K562 (cell line): ENCODE measurements at regions of chr7 and their contacts with region 1.

Region 1: GRCh38 chr7:151448261-151449252 is 8.6 kb upstream of the CRYGN start:
- DNase-seq: peak; percentile 81 to 92 (median 88)
- ATAC-seq: peak; percentile 93
- H3K4me3 ChIP-seq: peak overlapping the region; percentile 27
- H3K27ac ChIP-seq: no peak overlapping the region
- H3K4me1 ChIP-seq: peaks cover 0 to 24% of the 10 kb centered on the region in 2 experiments; a peak in 2 of 5 replicates
- H3K27me3 ChIP-seq: peaks cover 37 to 40% of the 10 kb centered on the region in 2 experiments
- CTCF ChIP-seq: peak; percentile 94 to 96 (median 95)
- EP300 ChIP-seq: no peak
- POLR2A ChIP-seq: no peak
- RAD21 ChIP-seq: peak; percentile 85 to 96

Region 2: DNA sequence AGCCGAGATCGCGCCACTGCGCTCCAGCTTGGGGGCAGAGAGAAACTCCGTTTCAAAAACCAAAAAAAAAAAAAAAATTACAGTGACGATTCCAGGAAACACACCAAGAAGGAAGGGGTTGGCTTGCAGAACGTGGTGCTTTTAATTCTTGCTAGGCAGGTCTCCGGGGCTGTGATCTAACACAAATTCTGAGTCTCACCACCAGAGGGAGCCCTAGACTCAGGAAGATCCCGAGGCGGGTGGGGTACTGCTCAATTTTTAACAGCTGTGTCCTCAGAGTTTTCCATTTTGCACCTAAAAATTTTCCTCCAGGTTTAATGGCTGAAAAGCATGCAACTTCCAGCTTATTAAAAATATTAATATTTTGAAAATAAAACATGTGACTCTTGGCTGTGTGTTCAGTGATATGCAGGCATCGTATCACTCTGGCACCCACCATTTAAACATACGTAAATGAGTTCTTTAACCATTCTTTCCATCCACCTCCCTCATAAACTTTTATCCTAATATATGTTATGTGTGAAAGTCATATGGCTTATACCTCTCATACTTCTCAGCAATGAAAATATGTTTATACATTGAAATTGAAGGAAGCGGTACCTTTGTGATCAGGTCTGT is 133.4 kb before region 1 on chr7:
- CTCF ChIA-PET with region 1: interaction called, 75 read pairs
- POLR2A ChIA-PET with region 1: interaction called, 3 read pairs
- in situ Hi-C with region 1: loop called (anchors 5 kb)
- intact Hi-C with region 1: loop called (anchors 1 kb)
- DNase-seq: peak; percentile 87 to 95 (median 92)
- ATAC-seq: peak; percentile 98
- H3K4me3 ChIP-seq: no peak overlapping the region
- H3K27ac ChIP-seq: no peak overlapping the region
- H3K4me1 ChIP-seq: peaks cover 0 to 3% of the 10 kb centered on the region in 2 experiments; a peak in 1 of 5 replicates
- H3K27me3 ChIP-seq: peaks cover 3 to 8% of the 10 kb centered on the region in 2 experiments; a peak in 3 of 5 replicates
- CTCF ChIP-seq: peak; percentile 89 to 98 (median 94)
- EP300 ChIP-seq: no peak
- POLR2A ChIP-seq: no peak
- RAD21 ChIP-seq: peak; percentile 97 to 98

Region 3: DNA sequence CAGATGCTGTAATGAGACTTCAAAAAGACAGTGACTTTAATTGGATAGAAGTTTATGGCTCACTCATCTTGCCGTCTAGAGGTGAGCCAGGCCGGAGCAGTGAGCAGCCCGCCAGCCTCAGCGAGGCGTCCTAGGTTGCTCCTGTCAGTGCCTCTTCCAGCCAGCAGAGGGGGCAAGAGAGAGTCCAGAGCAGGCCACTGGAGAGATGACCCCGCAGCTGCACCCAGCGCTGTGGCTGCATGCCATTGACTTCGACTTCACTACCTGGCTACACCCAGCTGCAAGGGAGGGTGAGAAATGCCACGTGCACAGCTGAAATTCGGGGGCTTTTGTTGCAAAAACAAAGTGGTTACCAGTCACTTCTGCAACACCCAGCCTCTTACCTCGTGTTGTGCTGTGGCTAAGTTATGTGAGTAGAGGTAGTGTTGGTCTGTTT is 80.4 kb before region 1 on chr7:
- CTCF ChIA-PET with region 1: interaction called, 43 read pairs
- POLR2A ChIA-PET with region 1: interaction called, 5 read pairs
- in situ Hi-C with region 1: no loop called
- intact Hi-C with region 1: loop called (anchors 1 kb)
- DNase-seq: peak; percentile 88 to 94 (median 92)
- ATAC-seq: peak; percentile 100
- H3K4me3 ChIP-seq: no peak overlapping the region
- H3K27ac ChIP-seq: no peak overlapping the region
- H3K4me1 ChIP-seq: peaks cover 0 to 4% of the 10 kb centered on the region in 2 experiments; a peak in 3 of 5 replicates
- H3K27me3 ChIP-seq: no peaks in the 10 kb centered on the region
- CTCF ChIP-seq: peak; percentile 96 to 99 (median 98)
- EP300 ChIP-seq: no peak
- POLR2A ChIP-seq: no peak
- RAD21 ChIP-seq: peak; percentile 85 to 96

Region 4: DNA sequence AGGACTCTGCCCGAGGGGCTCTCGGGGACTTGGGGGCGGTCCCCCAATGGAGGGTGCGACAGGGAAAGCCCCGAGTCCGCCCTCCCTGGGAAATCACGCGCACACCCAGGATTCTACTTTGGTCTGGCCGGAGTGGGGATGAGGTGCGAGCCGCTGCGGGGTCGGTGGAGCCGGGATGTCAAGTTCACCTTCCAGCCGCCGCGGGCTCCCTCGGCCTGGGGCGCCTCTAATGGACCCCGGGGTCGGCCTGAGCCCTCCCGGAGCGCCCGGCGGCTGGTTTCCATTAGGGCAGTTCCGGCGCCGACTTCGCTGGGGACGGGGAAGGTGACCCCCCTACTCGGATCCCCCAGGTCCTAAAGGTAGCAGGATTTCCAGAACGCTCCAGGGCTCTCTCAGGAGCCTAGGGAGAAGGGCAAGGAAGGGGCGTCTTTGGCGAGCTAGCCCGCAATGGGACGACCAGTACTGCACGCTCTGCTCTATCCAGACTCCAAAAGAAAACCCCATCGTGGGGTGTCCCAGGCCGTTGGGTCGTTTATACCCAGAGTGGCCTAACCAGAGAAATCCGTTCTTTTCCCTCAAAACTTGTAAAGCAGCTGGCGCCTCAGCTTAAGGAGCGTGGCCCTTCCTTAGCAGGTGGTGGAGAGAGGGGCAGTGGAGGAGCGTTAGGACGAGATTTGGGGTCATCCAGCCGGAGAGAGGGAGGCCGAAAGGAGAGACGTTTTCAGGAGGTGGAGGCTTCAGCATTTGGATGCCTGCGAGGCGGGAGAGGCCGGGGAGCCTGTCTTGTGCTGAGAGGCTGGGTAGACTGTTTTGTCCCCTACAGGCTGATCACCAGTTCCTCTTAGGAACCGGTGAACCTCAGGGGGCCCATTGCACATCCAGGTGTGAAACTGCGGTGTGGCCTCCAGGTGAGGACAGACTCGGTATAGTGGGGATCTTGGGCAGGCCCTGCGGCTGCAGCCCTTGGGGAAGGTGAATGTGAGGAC is 37.9 kb before region 1 on chr7:
- CTCF ChIA-PET with region 1: no interaction called
- POLR2A ChIA-PET with region 1: no interaction called
- in situ Hi-C with region 1: no loop called
- intact Hi-C with region 1: loop called (anchors 5 kb)
- DNase-seq: no peak
- ATAC-seq: no peak
- H3K4me3 ChIP-seq: no peak overlapping the region
- H3K27ac ChIP-seq: no peak overlapping the region
- H3K4me1 ChIP-seq: peaks cover 11 to 29% of the 10 kb centered on the region in 2 experiments
- H3K27me3 ChIP-seq: peaks cover 4 to 6% of the 10 kb centered on the region in 2 experiments; a peak in 1 of 5 replicates
- CTCF ChIP-seq: no peak
- EP300 ChIP-seq: no peak
- POLR2A ChIP-seq: no peak
- RAD21 ChIP-seq: no peak

Region 5: GRCh38 chr7:151759591-151760042 is 311.1 kb after region 1 on chr7:
- CTCF ChIA-PET with region 1: no interaction called
- POLR2A ChIA-PET with region 1: no interaction called
- in situ Hi-C with region 1: no loop called
- intact Hi-C with region 1: loop called (anchors 5 kb)
- DNase-seq: peak; percentile 77 to 91 (median 86)
- ATAC-seq: peak; percentile 90
- H3K4me3 ChIP-seq: no peak overlapping the region
- H3K27ac ChIP-seq: no peak overlapping the region
- H3K4me1 ChIP-seq: peaks cover 0 to 7% of the 10 kb centered on the region in 2 experiments; a peak in 3 of 5 replicates
- H3K27me3 ChIP-seq: peaks cover 43 to 91% of the 10 kb centered on the region in 2 experiments
- CTCF ChIP-seq: peak; percentile 88 to 97 (median 96)
- EP300 ChIP-seq: no peak
- POLR2A ChIP-seq: no peak
- RAD21 ChIP-seq: peak; percentile 78 to 88

Region 6: GRCh38 chr7:151806204-151806603 is 357.6 kb after region 1 on chr7:
- CTCF ChIA-PET with region 1: no interaction called
- POLR2A ChIA-PET with region 1: no interaction called
- in situ Hi-C with region 1: no loop called
- intact Hi-C with region 1: no loop called
- DNase-seq: no peak
- ATAC-seq: no peak
- H3K4me3 ChIP-seq: no peak overlapping the region
- H3K27ac ChIP-seq: no peak overlapping the region
- H3K4me1 ChIP-seq: peaks cover 0 to 3% of the 10 kb centered on the region in 2 experiments; a peak in 1 of 5 replicates
- H3K27me3 ChIP-seq: peaks cover 69 to 86% of the 10 kb centered on the region in 2 experiments
- CTCF ChIP-seq: no peak
- EP300 ChIP-seq: no peak
- POLR2A ChIP-seq: no peak
- RAD21 ChIP-seq: no peak